ENCODE measurements at regions of chr1 and their contacts with region 1.

Region 1: GRCh38 chr1:45521398-45522323 is at the start of gene PRDX1:
- DNase-seq: peak; percentile 86 to 96 (median 92)
- ATAC-seq: peak; percentile 88 to 93 (median 90)
- H3K4me3 ChIP-seq: peak within 1 kb of the TSS; percentile 82 to 100
- H3K4me3 Mint-ChIP-seq: peak within 1 kb of the TSS; percentile 91 to 97 (median 96)
- H3K27ac ChIP-seq: peak within 1 kb of the TSS; percentile 68
- H3K27ac Mint-ChIP-seq: peak within 1 kb of the TSS; percentile 94 to 95
- H3K4me1 ChIP-seq: peaks cover 0 to 34% of the 10 kb centered on the region in 2 experiments
- H3K4me1 Mint-ChIP-seq: peaks cover 25 to 40% (median 36%) of the 10 kb centered on the region in 3 donors
- H3K27me3 ChIP-seq: peaks cover 0 to 4% of the 10 kb centered on the region in 2 experiments
- H3K27me3 Mint-ChIP-seq: no peaks in the 10 kb centered on the region
- total RNA-seq, gene PRDX1: 59.3 to 156 (median 151) TPM

Region 2: GRCh38 chr1:44807262-44808062 is 714.2 kb before region 1 on chr1 and contains the start of gene DYNLT4:
- CTCF ChIA-PET with region 1: no interaction called
- POLR2A ChIA-PET with region 1: no interaction called
- DNase-seq: peak; percentile 81 to 97 (median 91)
- ATAC-seq: peak; percentile 61 to 74 (median 70)
- H3K4me3 ChIP-seq: peak within 1 kb of the TSS; percentile 16 to 35
- H3K4me3 Mint-ChIP-seq: peak within 1 kb of the TSS; percentile 61 to 85 (median 68)
- H3K27ac ChIP-seq: peak within 1 kb of the TSS; percentile 98
- H3K27ac Mint-ChIP-seq: peak within 1 kb of the TSS; percentile 99
- H3K4me1 ChIP-seq: peaks cover 60 to 92% of the 10 kb centered on the region in 2 experiments
- H3K4me1 Mint-ChIP-seq: peaks cover 86 to 92% (median 87%) of the 10 kb centered on the region in 3 donors
- H3K27me3 ChIP-seq: no peaks in the 10 kb centered on the region
- H3K27me3 Mint-ChIP-seq: no peaks in the 10 kb centered on the region
- total RNA-seq, gene DYNLT4: 0.36 to 4.3 (median 2.3) TPM in 4 of 5 donors, not detected in the other

Region 3: GRCh38 chr1:45543581-45544417 is 22.1 kb after region 1 on chr1:
- CTCF ChIA-PET with region 1: interaction called, 4 to 10 read pairs
- POLR2A ChIA-PET with region 1: interaction called, 3 to 4 read pairs
- DNase-seq: peak; percentile 23 to 91 (median 71)
- ATAC-seq: peak; percentile 94 to 98 (median 96)
- H3K4me3 ChIP-seq: no peak overlapping the region
- H3K4me3 Mint-ChIP-seq: peak overlapping the region in 2 of 3 donors; percentile 32 to 66
- H3K27ac ChIP-seq: peak overlapping the region; percentile 54
- H3K27ac Mint-ChIP-seq: peak overlapping the region; percentile 26 to 44
- H3K4me1 ChIP-seq: peaks cover 23 to 28% of the 10 kb centered on the region in 2 experiments
- H3K4me1 Mint-ChIP-seq: peaks cover 12 to 33% (median 27%) of the 10 kb centered on the region in 3 donors
- H3K27me3 ChIP-seq: peaks cover 0 to 2% of the 10 kb centered on the region in 2 experiments
- H3K27me3 Mint-ChIP-seq: no peaks in the 10 kb centered on the region

Region 4: DNA sequence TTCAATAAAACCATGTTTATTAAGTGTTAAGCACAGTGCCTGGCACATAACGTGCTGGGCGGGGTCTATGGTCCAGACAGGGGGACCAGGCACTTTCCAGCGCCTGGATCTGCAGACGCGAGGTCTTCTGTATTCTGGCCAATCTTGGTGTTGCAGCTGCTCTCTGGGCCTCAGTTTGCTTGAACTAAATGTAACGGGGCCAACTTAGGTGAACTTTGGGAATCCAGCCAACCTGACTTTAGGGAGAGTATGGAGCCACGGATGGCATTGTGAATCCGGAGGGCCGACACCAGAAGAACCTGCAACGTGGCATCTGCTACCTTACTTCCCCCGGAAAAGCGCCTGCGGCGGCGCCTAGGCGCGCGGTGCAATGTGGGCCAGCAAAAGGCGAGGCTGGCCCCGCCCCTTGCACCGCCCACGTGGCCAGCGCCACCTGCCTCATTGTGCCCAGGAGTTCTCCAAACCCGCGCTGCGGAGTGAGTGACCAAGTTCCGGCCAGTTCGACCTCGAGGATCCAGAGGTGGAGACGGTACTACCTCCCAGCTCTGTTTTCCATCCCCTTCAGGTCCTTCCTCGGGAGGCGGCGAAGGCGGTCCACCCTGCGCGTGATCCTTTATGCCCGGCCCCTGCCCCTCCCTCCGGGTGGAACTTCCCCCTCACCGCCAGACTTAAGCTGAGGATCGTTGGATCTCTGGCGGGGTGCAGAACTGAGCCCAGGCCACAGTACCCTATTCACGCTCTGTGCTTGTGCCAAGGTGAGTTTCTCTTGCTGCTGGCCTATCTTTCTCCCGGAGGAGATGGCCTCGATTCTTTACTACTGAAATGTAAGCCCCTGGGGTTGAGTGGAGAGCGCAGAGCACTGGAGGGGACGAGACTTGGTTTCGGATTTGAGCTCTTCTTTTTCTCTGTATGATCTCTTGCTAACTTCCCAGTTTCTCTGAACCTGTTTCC is 29.0 kb after region 1 on chr1 and contains the start of gene AKR1A1:
- CTCF ChIA-PET with region 1: interaction called, 3 to 11 read pairs
- POLR2A ChIA-PET with region 1: interaction called, 4 to 10 read pairs
- DNase-seq: peak; percentile 72 to 92 (median 83)
- ATAC-seq: peak; percentile 94 to 98 (median 96)
- H3K4me3 ChIP-seq: peak within 1 kb of the TSS; percentile 71 to 90
- H3K4me3 Mint-ChIP-seq: peak within 1 kb of the TSS; percentile 93 to 97 (median 94)
- H3K27ac ChIP-seq: peak within 1 kb of the TSS; percentile 76
- H3K27ac Mint-ChIP-seq: peak within 1 kb of the TSS; percentile 92 to 96
- H3K4me1 ChIP-seq: peaks cover 9 to 25% of the 10 kb centered on the region in 2 experiments
- H3K4me1 Mint-ChIP-seq: peaks cover 20 to 26% (median 22%) of the 10 kb centered on the region in 3 donors
- H3K27me3 ChIP-seq: no peaks in the 10 kb centered on the region
- H3K27me3 Mint-ChIP-seq: no peaks in the 10 kb centered on the region
- total RNA-seq, gene AKR1A1: 48.2 to 105 (median 92.9) TPM

Region 5: DNA sequence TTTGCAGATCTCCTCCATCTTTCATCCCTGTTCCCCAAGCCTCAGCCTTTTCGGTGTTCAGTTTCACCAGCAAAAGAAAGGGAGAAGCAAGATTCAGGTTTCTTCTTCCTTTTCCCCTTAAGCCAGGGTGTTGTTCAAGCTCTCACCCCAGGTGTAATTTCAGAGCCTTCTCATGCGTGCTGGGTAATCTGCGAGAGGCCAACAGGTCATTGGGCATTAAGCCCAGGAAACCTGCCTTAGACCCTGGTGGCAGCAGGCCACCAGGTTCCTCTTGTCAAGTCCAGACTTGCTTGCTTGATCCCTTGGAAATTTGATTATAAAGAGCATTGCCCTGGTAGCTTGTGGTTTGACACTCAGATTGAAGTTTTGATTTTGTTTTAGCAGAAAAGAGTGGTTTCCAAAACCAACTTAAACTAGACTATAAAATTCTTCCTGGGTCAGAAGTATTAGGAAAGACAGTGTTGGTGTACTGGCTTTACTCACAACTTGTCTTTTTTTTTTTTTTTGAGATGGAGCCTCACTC is 35.8 kb after region 1 on chr1:
- CTCF ChIA-PET with region 1: interaction called, 3 to 10 read pairs
- POLR2A ChIA-PET with region 1: interaction called in 1 of 2 experiments, 3 read pairs
- DNase-seq: no peak
- ATAC-seq: no peak
- H3K4me3 ChIP-seq: no peak overlapping the region
- H3K4me3 Mint-ChIP-seq: no peak overlapping the region
- H3K27ac ChIP-seq: no peak overlapping the region
- H3K27ac Mint-ChIP-seq: no peak overlapping the region
- H3K4me1 ChIP-seq: peaks cover 0 to 3% of the 10 kb centered on the region in 2 experiments
- H3K4me1 Mint-ChIP-seq: peaks cover 8 to 15% (median 9%) of the 10 kb centered on the region in 3 donors
- H3K27me3 ChIP-seq: no peaks in the 10 kb centered on the region
- H3K27me3 Mint-ChIP-seq: no peaks in the 10 kb centered on the region

Region 6: GRCh38 chr1:45612941-45613579 is 91.4 kb after region 1 on chr1:
- CTCF ChIA-PET with region 1: interaction called in 1 of 2 experiments, 10 read pairs
- POLR2A ChIA-PET with region 1: interaction called in 1 of 2 experiments, 3 read pairs
- DNase-seq: no peak
- ATAC-seq: no peak
- H3K4me3 ChIP-seq: no peak overlapping the region
- H3K4me3 Mint-ChIP-seq: no peak overlapping the region
- H3K27ac ChIP-seq: no peak overlapping the region
- H3K27ac Mint-ChIP-seq: peak overlapping the region in 1 of 2 donors; percentile 1
- H3K4me1 ChIP-seq: no peaks in the 10 kb centered on the region
- H3K4me1 Mint-ChIP-seq: peaks cover 10 to 17% (median 12%) of the 10 kb centered on the region in 3 donors
- H3K27me3 ChIP-seq: no peaks in the 10 kb centered on the region
- H3K27me3 Mint-ChIP-seq: no peaks in the 10 kb centered on the region

Region 7: DNA sequence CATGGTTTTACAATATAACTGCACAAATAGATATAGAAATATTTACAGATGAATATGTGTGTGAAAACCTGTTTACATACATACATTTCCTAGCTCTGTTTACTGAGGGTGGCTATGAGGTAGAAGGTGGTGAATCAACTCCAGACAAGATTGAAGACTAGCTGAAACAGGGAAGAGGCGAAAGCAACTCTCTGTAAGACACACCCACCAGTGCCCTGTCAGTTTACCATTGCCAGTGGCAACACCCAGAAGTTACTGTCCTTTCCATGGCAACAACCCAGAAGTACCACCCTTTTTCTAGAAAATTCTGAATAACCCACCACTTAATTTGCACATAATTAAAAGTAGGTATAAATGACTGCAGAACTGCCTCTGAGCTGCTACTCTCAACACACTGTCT is 183.0 kb after region 1 on chr1:
- CTCF ChIA-PET with region 1: no interaction called
- POLR2A ChIA-PET with region 1: no interaction called
- DNase-seq: no peak
- ATAC-seq: no peak
- H3K4me3 ChIP-seq: no peak overlapping the region
- H3K4me3 Mint-ChIP-seq: no peak overlapping the region
- H3K27ac ChIP-seq: no peak overlapping the region
- H3K27ac Mint-ChIP-seq: no peak overlapping the region
- H3K4me1 ChIP-seq: no peaks in the 10 kb centered on the region
- H3K4me1 Mint-ChIP-seq: no peaks in the 10 kb centered on the region
- H3K27me3 ChIP-seq: no peaks in the 10 kb centered on the region
- H3K27me3 Mint-ChIP-seq: no peaks in the 10 kb centered on the region